Activated CD8-positive, alpha-beta memory T cell treated with anti-CD3 and anti-CD28 coated beads, Interleukin-2, amount 10 ng/mL, durations not matched to agents 7 days and 5 days (primary cell): ENCODE measurements at regions of chr6 and their contacts with region 1.

Region 1: GRCh38 chr6:90285611-90286381 is 10.8 kb downstream of the BACH2 start:
- DNase-seq: peak; percentile 86
- ATAC-seq: peak; percentile 69
- H3K4me3 Mint-ChIP-seq: peak overlapping the region; percentile 79
- H3K27ac Mint-ChIP-seq: peak overlapping the region; percentile 93
- H3K4me1 Mint-ChIP-seq: peaks cover 59% of the 10 kb centered on the region
- H3K27me3 Mint-ChIP-seq: peaks cover 10% of the 10 kb centered on the region

Region 2: GRCh38 chr6:90274451-90275030 is 11.3 kb before region 1 on chr6:
- CTCF ChIA-PET with region 1: interaction called, 30 read pairs
- DNase-seq: peak; percentile 91
- ATAC-seq: peak; percentile 90
- H3K4me3 Mint-ChIP-seq: peak overlapping the region; percentile 46
- H3K27ac Mint-ChIP-seq: peak overlapping the region; percentile 85
- H3K4me1 Mint-ChIP-seq: peaks cover 58% of the 10 kb centered on the region
- H3K27me3 Mint-ChIP-seq: peaks cover 5% of the 10 kb centered on the region

Region 3: DNA sequence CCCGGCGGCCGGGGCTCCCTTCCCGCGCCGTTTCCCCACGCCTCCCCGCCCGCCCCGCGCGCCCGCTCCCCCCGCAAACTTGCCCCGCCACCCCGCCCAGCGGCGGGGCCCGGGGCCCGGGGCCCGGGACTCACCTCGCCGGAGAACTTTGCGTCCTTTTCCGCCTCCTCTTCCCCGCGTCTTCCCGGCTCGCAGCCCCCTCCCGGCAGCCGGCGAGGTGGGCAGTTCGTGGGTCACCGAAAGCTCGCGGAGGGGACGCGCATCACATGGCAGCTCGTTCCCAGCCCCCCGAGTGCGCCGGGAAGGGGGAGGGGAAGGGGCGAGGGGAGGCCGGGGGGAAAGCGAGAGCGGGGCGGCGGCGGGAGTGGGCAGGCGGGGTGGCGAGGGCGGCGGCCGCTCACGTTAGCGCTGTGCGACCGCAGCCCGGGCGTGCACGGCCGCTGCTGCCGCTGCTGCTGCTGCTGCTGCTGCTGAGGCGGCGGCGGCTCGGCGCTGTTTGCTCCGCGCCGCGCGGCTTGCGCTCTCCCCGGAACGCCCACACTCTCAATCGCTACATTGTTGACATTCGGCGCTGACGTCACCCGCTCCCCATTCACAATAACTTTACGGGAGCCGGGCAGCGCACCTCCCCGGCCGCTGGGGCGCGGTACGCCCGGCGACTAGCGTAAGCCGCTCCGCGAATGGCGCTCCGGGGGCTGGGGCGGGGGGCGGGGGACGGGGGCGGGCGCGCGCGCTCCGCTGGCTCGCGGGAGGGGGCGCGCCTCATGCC is 10.7 kb after region 1 on chr6 and contains the start of gene BACH2:
- CTCF ChIA-PET with region 1: interaction called, 10 read pairs
- DNase-seq: peak; percentile 95
- ATAC-seq: peak; percentile 81
- H3K4me3 Mint-ChIP-seq: peak within 1 kb of the TSS; percentile 84
- H3K27ac Mint-ChIP-seq: peak within 1 kb of the TSS; percentile 85
- H3K4me1 Mint-ChIP-seq: peaks cover 24% of the 10 kb centered on the region
- H3K27me3 Mint-ChIP-seq: peaks cover 52% of the 10 kb centered on the region
- total RNA-seq, gene BACH2: 21.5 to 22.6 TPM